ACHN (cell line): ENCODE measurements at regions of chr14 and their contacts with region 1.

Region 1: DNA sequence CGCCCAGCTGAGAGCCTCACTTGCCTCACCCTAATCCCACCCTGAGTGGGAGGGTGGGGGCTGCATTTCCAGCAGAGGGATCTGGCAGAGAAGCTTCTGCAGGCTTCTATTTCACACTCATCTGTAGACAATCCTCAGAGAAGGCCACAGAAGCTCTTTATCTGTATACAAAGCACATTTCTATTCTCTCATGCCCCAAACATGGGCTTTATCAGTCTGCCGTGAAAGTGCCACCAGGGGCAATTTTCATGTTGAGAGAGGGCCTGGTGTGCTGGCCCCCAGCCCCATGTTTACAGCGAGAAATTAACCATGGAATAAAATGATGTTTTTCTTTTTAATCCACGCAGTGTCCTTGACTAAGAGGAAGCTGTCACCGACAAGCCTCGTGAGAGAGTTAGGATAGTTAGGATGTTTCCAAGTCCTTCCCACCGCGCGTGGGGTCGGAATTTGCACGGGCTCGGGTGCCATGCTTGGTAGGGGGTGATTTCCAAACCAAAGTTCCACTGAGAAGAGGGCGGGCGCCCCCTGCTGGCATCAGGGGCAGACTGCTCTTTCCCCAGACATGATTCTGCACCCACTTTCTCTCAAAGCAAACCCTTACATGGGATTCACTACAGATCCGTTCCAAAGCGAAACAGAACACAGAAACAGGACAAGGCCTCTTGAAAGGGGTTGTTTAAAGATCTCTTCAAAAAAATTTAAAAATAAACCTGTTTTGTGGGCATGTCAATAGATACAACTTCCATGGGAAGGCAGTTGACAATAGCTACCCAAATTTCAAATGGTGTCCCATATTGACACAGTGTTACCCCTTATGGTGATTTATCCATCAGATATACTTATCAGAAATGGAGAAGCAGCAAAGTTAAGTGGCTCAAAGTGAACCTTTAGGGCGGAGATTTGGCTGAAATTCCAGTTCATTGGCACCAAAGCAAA is 19.4 kb downstream of the BDKRB1 start:
- DNase-seq: peak; percentile 51

Region 2: DNA sequence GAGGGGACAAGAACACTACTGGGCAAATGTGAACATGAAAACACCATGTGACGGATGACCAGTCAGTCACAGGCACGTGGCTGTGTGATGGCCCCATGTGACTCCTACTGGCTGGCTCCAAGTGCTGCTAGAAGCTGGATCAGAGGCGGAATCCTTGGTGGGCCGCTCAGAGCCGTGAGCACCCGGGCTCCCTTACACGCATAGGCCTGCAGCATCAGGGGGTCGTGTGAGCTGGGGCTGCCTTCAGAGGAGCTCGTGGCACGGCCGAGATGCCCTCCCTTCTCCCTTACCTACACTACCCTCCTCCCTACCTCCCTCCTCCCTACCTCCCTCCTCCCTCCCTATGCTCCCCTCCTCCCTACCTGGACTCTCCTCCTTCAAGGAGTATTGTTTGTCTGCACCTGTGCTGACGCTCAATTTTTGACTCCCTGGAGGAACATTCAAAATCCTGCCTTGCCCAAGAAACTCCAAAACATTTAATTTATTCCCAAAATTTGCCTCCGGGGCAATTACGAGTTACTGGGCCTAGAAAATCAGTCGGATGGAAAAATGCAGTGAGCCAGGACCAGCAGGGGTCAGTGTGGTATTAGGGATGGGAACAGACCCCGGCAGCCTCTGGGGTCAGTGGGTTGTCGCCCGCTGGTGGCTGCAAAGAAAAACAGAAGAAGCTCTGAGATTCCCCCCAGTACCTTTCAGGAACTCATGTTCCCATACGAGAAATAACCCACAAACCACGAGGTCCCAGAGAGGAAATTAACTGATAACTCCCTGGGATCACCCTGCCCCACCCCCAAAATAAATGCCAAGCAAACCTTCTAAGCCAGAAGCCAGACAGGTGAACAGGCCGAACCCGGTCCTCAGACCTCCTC is 175.1 kb before region 1 on chr14:
- in situ Hi-C with region 1: loop called (anchors 25 kb)
- DNase-seq: peak; percentile 72